PC-9 (cell line): ENCODE measurements at regions of chr2 and their contacts with region 1.

Region 1: GRCh38 chr2:12716282-12717190 is at the start of gene TRIB2:
- DNase-seq: peak; percentile 66 to 77
- H3K4me3 ChIP-seq: peak within 1 kb of the TSS; percentile 96
- H3K27ac ChIP-seq: peak within 1 kb of the TSS; percentile 94
- H3K4me1 ChIP-seq: peaks cover 35% of the 10 kb centered on the region
- H3K27me3 ChIP-seq: no peaks in the 10 kb centered on the region
- CTCF ChIP-seq: peak; percentile 8; the same call in 1 of the 2 replicates
- total RNA-seq, gene TRIB2: 18.9 and 20.2 TPM in 2 replicates

Region 2: GRCh38 chr2:11829947-11830707 is 886.4 kb before region 1 on chr2:
- CTCF ChIA-PET with region 1: interaction called, 19 read pairs
- POLR2A ChIA-PET with region 1: interaction called, 6 read pairs
- intact Hi-C with region 1: loop called (anchors 1 kb)
- DNase-seq: peak; percentile 85 to 99
- H3K4me3 ChIP-seq: peak overlapping the region; percentile 44
- H3K27ac ChIP-seq: peak overlapping the region; percentile 97
- H3K4me1 ChIP-seq: peaks cover 36% of the 10 kb centered on the region
- H3K27me3 ChIP-seq: no peaks in the 10 kb centered on the region
- CTCF ChIP-seq: peak; percentile 56; the same call in 1 of the 2 replicates

Region 3: GRCh38 chr2:12032398-12032797 is 684.1 kb before region 1 on chr2:
- CTCF ChIA-PET with region 1: interaction called, 12 read pairs
- POLR2A ChIA-PET with region 1: no interaction called
- intact Hi-C with region 1: no loop called
- DNase-seq: no peak
- H3K4me3 ChIP-seq: no peak overlapping the region
- H3K27ac ChIP-seq: no peak overlapping the region
- H3K4me1 ChIP-seq: peaks cover 24% of the 10 kb centered on the region
- H3K27me3 ChIP-seq: no peaks in the 10 kb centered on the region
- CTCF ChIP-seq: no peak

Region 4: GRCh38 chr2:12202301-12203075 is 514.0 kb before region 1 on chr2:
- CTCF ChIA-PET with region 1: interaction called, 10 read pairs
- POLR2A ChIA-PET with region 1: no interaction called
- intact Hi-C with region 1: no loop called
- DNase-seq: no peak
- H3K4me3 ChIP-seq: no peak overlapping the region
- H3K27ac ChIP-seq: no peak overlapping the region
- H3K4me1 ChIP-seq: no peaks in the 10 kb centered on the region
- H3K27me3 ChIP-seq: no peaks in the 10 kb centered on the region
- CTCF ChIP-seq: no peak

Region 5: GRCh38 chr2:12456293-12457151 is 260.0 kb before region 1 on chr2:
- CTCF ChIA-PET with region 1: no interaction called
- POLR2A ChIA-PET with region 1: no interaction called
- intact Hi-C with region 1: loop called (anchors 1 kb)
- DNase-seq: peak; percentile 81 to 100
- H3K4me3 ChIP-seq: peak overlapping the region; percentile 47; the same call in 1 of the 2 replicates
- H3K27ac ChIP-seq: peak overlapping the region; percentile 88
- H3K4me1 ChIP-seq: peaks cover 38% of the 10 kb centered on the region
- H3K27me3 ChIP-seq: no peaks in the 10 kb centered on the region
- CTCF ChIP-seq: no peak

Region 6: DNA sequence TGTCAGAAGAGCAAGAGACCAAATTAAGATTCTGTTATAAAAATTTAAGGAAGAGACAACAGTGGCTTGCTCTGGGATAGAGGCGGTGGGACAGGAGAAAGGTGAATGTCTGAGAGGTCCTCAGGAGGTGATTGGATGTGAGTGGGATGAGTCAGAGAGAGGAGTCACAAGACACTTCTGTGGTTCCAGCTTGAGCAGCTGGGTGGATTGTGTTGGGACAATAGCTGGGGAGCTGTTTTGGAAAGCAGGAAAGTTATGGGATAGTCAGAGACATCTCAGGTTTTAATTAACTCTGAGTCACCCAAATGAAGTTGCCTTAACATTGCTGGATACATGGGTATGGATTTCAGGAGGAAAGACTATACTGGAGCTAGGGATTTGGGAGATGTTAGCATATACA is 217.8 kb before region 1 on chr2:
- CTCF ChIA-PET with region 1: no interaction called
- POLR2A ChIA-PET with region 1: no interaction called
- intact Hi-C with region 1: no loop called
- DNase-seq: no peak
- H3K4me3 ChIP-seq: no peak overlapping the region
- H3K27ac ChIP-seq: no peak overlapping the region
- H3K4me1 ChIP-seq: peaks cover 16% of the 10 kb centered on the region
- H3K27me3 ChIP-seq: no peaks in the 10 kb centered on the region
- CTCF ChIP-seq: no peak

Region 7: GRCh38 chr2:12555012-12555645 is 161.4 kb before region 1 on chr2:
- CTCF ChIA-PET with region 1: interaction called, 9 read pairs
- POLR2A ChIA-PET with region 1: no interaction called
- intact Hi-C with region 1: loop called (anchors 1 kb)
- DNase-seq: peak; percentile 18 to 70
- H3K4me3 ChIP-seq: no peak overlapping the region
- H3K27ac ChIP-seq: 0 out of 2 replicates have a peak overlapping the region, but pooled peaks have one; percentile 4
- H3K4me1 ChIP-seq: peaks cover 20% of the 10 kb centered on the region
- H3K27me3 ChIP-seq: no peaks in the 10 kb centered on the region
- CTCF ChIP-seq: no peak

Region 8: GRCh38 chr2:12877761-12878160 is 161.2 kb after region 1 on chr2:
- CTCF ChIA-PET with region 1: no interaction called
- POLR2A ChIA-PET with region 1: no interaction called
- intact Hi-C with region 1: no loop called
- DNase-seq: no peak
- H3K4me3 ChIP-seq: no peak overlapping the region
- H3K27ac ChIP-seq: no peak overlapping the region
- H3K4me1 ChIP-seq: no peaks in the 10 kb centered on the region
- H3K27me3 ChIP-seq: no peaks in the 10 kb centered on the region
- CTCF ChIP-seq: no peak

Region 9: GRCh38 chr2:12931186-12931844 is 214.8 kb after region 1 on chr2:
- CTCF ChIA-PET with region 1: interaction called, 3 read pairs
- POLR2A ChIA-PET with region 1: no interaction called
- intact Hi-C with region 1: loop called (anchors 1 kb)
- DNase-seq: peak in 1 of 2 experiments; percentile 53
- H3K4me3 ChIP-seq: no peak overlapping the region
- H3K27ac ChIP-seq: peak overlapping the region; percentile 85
- H3K4me1 ChIP-seq: peaks cover 35% of the 10 kb centered on the region
- H3K27me3 ChIP-seq: no peaks in the 10 kb centered on the region
- CTCF ChIP-seq: peak; percentile 80